ENCODE measurements at regions of chr19 and their contacts with region 1.

Region 1: GRCh38 chr19:5031231-5032100 is 62.6 kb downstream of the KDM4B start:
- DNase-seq: peak; percentile 70 to 99
- H3K4me3 ChIP-seq: no peak overlapping the region
- H3K27ac ChIP-seq: no peak overlapping the region
- H3K4me1 ChIP-seq: peaks cover 0 to 4% (median 0%) of the 10 kb centered on the region in 4 experiments; a peak in 1 of 7 replicates
- H3K27me3 ChIP-seq: no peaks in the 10 kb centered on the region
- CTCF ChIP-seq: peak; percentile 94 to 98 (median 97)
- EP300 ChIP-seq: no peak
- POLR2A ChIP-seq: no peak
- RAD21 ChIP-seq: peak; percentile 97 to 98

Region 2: DNA sequence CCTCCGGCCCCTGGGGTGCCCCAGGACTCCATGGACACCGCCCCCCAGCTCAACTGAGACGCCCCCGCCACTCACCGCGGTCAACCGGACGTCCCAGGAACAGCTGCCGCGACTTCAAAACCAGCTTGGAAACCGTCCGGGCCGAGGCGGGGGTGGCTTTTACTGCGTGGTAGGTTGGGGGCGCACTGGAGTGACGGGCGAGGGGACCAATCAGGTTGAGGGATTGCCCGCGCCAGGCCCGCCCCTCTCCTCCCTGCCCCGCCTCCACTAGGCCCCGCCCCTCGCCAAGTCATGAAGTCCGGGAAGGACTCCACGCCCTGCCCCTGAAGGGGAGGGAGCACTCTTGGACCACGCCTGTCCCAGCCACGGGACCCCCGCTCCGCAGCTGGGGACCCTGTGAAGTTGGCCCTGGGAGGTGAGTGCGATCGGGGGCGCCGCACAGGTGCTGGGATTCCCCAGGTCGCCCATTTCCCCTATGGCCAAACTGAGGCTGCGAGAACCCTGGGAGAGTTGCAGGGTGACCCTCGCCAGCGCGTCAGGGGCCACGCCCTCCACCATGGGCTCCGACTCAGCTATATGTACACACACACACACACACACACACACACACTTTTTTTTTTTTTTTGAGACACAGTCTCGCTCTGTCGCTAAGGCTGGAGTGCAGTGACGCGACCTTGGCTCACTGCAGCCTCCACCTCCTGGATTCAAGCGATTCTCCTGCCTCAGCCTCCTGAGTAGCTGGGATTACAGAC is 163.8 kb before region 1 on chr19 and contains the start of gene PLIN3:
- CTCF ChIA-PET with region 1: interaction called, 48 read pairs
- POLR2A ChIA-PET with region 1: no interaction called
- DNase-seq: peak; percentile 81 to 99
- H3K4me3 ChIP-seq: peak within 1 kb of the TSS; percentile 77 to 98 (median 84)
- H3K27ac ChIP-seq: peak within 1 kb of the TSS; percentile 46
- H3K4me1 ChIP-seq: peaks cover 0 to 5% (median 2%) of the 10 kb centered on the region in 4 experiments; a peak in 3 of 7 replicates
- H3K27me3 ChIP-seq: no peaks in the 10 kb centered on the region
- CTCF ChIP-seq: no peak
- EP300 ChIP-seq: no peak
- POLR2A ChIP-seq: no peak
- RAD21 ChIP-seq: no peak
- total RNA-seq, gene PLIN3: 60.7 and 68.1 TPM in 2 replicates

Region 3: GRCh38 chr19:4939466-4939865 is 92.0 kb before region 1 on chr19:
- CTCF ChIA-PET with region 1: interaction called, 67 read pairs
- POLR2A ChIA-PET with region 1: no interaction called
- DNase-seq: no peak
- H3K4me3 ChIP-seq: no peak overlapping the region
- H3K27ac ChIP-seq: no peak overlapping the region
- H3K4me1 ChIP-seq: no peaks in the 10 kb centered on the region
- H3K27me3 ChIP-seq: no peaks in the 10 kb centered on the region
- CTCF ChIP-seq: no peak
- EP300 ChIP-seq: no peak
- POLR2A ChIP-seq: no peak
- RAD21 ChIP-seq: no peak

Region 4: GRCh38 chr19:4976401-4977298 is 54.8 kb before region 1 on chr19:
- CTCF ChIA-PET with region 1: interaction called, 38 read pairs
- POLR2A ChIA-PET with region 1: no interaction called
- DNase-seq: peak in 1 of 2 experiments; percentile 70
- H3K4me3 ChIP-seq: no peak overlapping the region
- H3K27ac ChIP-seq: no peak overlapping the region
- H3K4me1 ChIP-seq: peaks cover 0 to 8% (median 2%) of the 10 kb centered on the region in 4 experiments; a peak in 6 of 7 replicates
- H3K27me3 ChIP-seq: no peaks in the 10 kb centered on the region
- CTCF ChIP-seq: peak; percentile 62 to 81 (median 69)
- EP300 ChIP-seq: no peak
- POLR2A ChIP-seq: no peak
- RAD21 ChIP-seq: peak in 1 of 2 experiments; percentile 31; a peak in 1 of 4 replicates

Region 5: GRCh38 chr19:5018224-5019015 is 13.0 kb before region 1 on chr19:
- CTCF ChIA-PET with region 1: interaction called, 126 read pairs
- POLR2A ChIA-PET with region 1: interaction called, 3 read pairs
- DNase-seq: no peak
- H3K4me3 ChIP-seq: no peak overlapping the region
- H3K27ac ChIP-seq: no peak overlapping the region; the same call in 1 of the 2 replicates
- H3K4me1 ChIP-seq: no peaks in the 10 kb centered on the region; a peak in 2 of 7 replicates
- H3K27me3 ChIP-seq: no peaks in the 10 kb centered on the region
- CTCF ChIP-seq: no peak
- EP300 ChIP-seq: no peak
- POLR2A ChIP-seq: no peak
- RAD21 ChIP-seq: no peak

Region 6: GRCh38 chr19:5122121-5122400 is 90.6 kb after region 1 on chr19:
- CTCF ChIA-PET with region 1: no interaction called
- POLR2A ChIA-PET with region 1: no interaction called
- DNase-seq: no peak
- H3K4me3 ChIP-seq: no peak overlapping the region
- H3K27ac ChIP-seq: no peak overlapping the region
- H3K4me1 ChIP-seq: peaks cover 5 to 36% (median 30%) of the 10 kb centered on the region in 4 experiments
- H3K27me3 ChIP-seq: no peaks in the 10 kb centered on the region
- CTCF ChIP-seq: no peak
- EP300 ChIP-seq: no peak
- POLR2A ChIP-seq: no peak
- RAD21 ChIP-seq: no peak

Region 7: GRCh38 chr19:5182751-5183150 is 151.3 kb after region 1 on chr19:
- CTCF ChIA-PET with region 1: no interaction called
- POLR2A ChIA-PET with region 1: no interaction called
- DNase-seq: no peak
- H3K4me3 ChIP-seq: no peak overlapping the region
- H3K27ac ChIP-seq: no peak overlapping the region
- H3K4me1 ChIP-seq: no peaks in the 10 kb centered on the region; a peak in 1 of 7 replicates
- H3K27me3 ChIP-seq: no peaks in the 10 kb centered on the region
- CTCF ChIP-seq: no peak
- EP300 ChIP-seq: no peak
- POLR2A ChIP-seq: no peak
- RAD21 ChIP-seq: no peak